Activated B cell treated with CpG ODN at 0.5 μM for 24 hours (primary cell): ENCODE measurements at regions of chr19 and their contacts with region 1.

Region 1: DNA sequence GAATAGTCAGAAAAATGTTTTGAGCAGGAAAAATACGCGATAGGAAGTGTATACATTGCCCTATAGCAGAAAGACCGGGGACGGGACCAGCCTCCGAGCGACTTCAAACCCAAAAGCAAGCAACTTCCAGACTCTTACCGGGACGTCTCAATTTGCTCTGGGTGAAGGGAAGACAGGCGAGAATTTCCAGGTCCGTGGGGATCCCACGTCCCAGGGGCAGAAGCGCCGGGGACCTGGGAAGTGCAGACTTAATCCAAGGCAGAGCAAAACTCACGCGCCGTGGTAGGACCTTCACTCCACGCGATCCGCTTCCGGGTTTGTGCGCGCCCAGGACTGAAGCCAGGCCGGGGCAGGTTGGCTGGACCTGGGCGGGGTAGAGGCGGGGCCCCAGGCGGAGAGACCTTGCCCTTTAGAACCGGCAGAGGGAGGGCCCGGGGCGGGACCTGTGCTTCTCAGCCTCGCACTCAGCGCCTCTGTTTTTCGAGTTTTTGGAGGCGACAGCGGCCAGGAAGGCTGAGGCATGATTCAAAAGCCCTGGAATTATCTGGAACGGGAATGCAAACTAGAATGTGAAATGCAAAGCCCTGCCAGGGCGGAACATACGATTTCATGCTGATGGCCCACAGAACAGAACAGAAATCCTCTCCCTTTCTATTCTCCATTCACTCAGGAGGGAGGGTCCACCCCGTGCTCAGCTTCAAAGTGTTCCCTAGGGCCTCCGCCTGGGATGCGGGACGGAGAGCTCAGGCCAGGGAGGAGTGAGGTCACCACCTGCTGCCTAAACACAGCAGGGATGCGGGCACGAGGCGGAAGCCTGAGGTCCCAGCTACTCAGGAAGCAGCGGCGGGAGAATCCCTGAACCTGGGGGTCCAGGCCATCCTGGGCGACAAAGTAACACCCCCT is at the start of gene ZNF600:
- DNase-seq: peak; percentile 88
- ATAC-seq: peak; percentile 99
- H3K4me3 Mint-ChIP-seq: peak within 1 kb of the TSS; percentile 96
- H3K27ac Mint-ChIP-seq: peak within 1 kb of the TSS; percentile 90
- H3K4me1 Mint-ChIP-seq: peaks cover 36% of the 10 kb centered on the region
- H3K27me3 Mint-ChIP-seq: no peaks in the 10 kb centered on the region
- CTCF ChIP-seq: no peak
- total RNA-seq, gene ZNF600: 25.2 and 30.5 TPM in 2 replicates

Region 2: GRCh38 chr19:52690369-52691214 is 96.1 kb before region 1 on chr19:
- CTCF ChIA-PET with region 1: no interaction called
- POLR2A ChIA-PET with region 1: no interaction called
- intact Hi-C with region 1: loop called (anchors 10 kb)
- DNase-seq: peak; percentile 88
- ATAC-seq: peak; percentile 97
- H3K4me3 Mint-ChIP-seq: peak overlapping the region; percentile 98
- H3K27ac Mint-ChIP-seq: peak overlapping the region; percentile 93
- H3K4me1 Mint-ChIP-seq: peaks cover 36% of the 10 kb centered on the region
- H3K27me3 Mint-ChIP-seq: no peaks in the 10 kb centered on the region
- CTCF ChIP-seq: no peak

Region 3: GRCh38 chr19:52922841-52923777 is 136.4 kb after region 1 on chr19 and contains the start of gene ZNF888:
- CTCF ChIA-PET with region 1: no interaction called
- POLR2A ChIA-PET with region 1: no interaction called
- intact Hi-C with region 1: loop called (anchors 2 kb)
- DNase-seq: peak; percentile 81
- ATAC-seq: peak; percentile 100
- H3K4me3 Mint-ChIP-seq: peak within 1 kb of the TSS; percentile 95
- H3K27ac Mint-ChIP-seq: peak within 1 kb of the TSS; percentile 88
- H3K4me1 Mint-ChIP-seq: peaks cover 29% of the 10 kb centered on the region
- H3K27me3 Mint-ChIP-seq: no peaks in the 10 kb centered on the region
- CTCF ChIP-seq: no peak
- total RNA-seq, gene ZNF888: 9.0 and 11.9 TPM in 2 replicates

Region 4: GRCh38 chr19:53013621-53014020 is 226.9 kb after region 1 on chr19 and contains the start of gene ERVV-1:
- CTCF ChIA-PET with region 1: no interaction called
- POLR2A ChIA-PET with region 1: no interaction called
- intact Hi-C with region 1: no loop called
- DNase-seq: no peak
- ATAC-seq: no peak
- H3K4me3 Mint-ChIP-seq: no peak within 1 kb of the TSS
- H3K27ac Mint-ChIP-seq: no peak within 1 kb of the TSS
- H3K4me1 Mint-ChIP-seq: no peaks in the 10 kb centered on the region
- H3K27me3 Mint-ChIP-seq: no peaks in the 10 kb centered on the region
- CTCF ChIP-seq: no peak
- total RNA-seq, gene ERVV-1: 0.11 and 0.12 TPM in 2 replicates